A549 (cell line): ENCODE measurements at regions of chr3 and their contacts with region 1.

Region 1: GRCh38 chr3:124905849-124906248 is 18.7 kb upstream of the ITGB5 start:
- DNase-seq: no peak
- ATAC-seq: peak; percentile 39 to 41; a peak in 2 of 6 replicates
- H3K4me3 ChIP-seq: no peak overlapping the region
- H3K27ac ChIP-seq: no peak overlapping the region
- H3K4me1 ChIP-seq: peaks cover 4% of the 10 kb centered on the region; the same call in 2 of the 3 replicates
- CTCF ChIP-seq: no peak
- EP300 ChIP-seq: no peak
- POLR2A ChIP-seq: no peak
- RAD21 ChIP-seq: peak in 1 of 2 experiments; percentile 25; a peak in 1 of 5 replicates

Region 2: DNA sequence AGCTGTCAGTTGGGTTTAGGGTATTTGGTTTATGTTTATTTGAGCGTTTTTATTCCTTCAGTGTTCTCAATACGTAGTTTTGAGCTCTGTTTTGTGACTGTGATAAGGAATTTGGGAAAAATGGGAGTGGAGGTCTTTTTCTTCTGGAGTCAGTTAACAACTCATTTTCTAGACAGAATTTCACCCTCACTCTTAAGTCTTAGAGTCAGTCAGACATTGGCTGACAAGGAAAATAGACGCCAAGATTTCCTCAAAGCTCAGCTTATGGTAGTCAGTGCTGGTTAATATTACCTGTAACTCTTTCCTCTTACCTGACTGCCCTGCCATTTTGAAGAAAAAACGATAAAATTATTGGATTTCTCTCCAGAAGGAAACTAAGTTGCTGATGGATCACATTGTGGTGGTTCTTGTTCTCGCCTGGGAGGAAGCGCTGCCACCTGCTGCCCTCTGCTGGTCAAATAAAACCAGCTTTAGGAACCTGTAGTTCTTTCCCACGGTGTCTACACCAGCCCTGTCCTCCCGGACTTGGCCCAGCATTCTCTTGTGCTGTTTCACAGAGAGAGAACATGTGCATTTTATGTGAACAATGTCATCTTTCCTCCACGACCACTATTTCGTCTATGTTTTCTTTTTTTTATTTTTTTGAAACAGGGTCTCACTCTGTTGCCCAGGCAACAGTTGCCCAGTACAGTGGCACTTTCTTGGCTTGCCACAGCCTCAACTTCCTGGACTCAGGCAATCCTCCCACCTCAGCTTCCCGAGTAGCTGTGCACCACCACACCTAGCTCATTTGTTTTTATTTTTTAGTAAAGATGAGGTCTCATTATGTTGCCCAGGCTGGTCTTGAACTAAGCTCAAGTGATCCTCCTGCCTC is 217.0 kb before region 1 on chr3:
- CTCF ChIA-PET with region 1: interaction called, 13 read pairs
- POLR2A ChIA-PET with region 1: no interaction called
- DNase-seq: peak; percentile 82 to 93
- ATAC-seq: peak; percentile 98 to 99
- H3K4me3 ChIP-seq: no peak overlapping the region
- H3K27ac ChIP-seq: no peak overlapping the region
- H3K4me1 ChIP-seq: no peaks in the 10 kb centered on the region
- CTCF ChIP-seq: peak; percentile 96
- EP300 ChIP-seq: no peak
- POLR2A ChIP-seq: no peak
- RAD21 ChIP-seq: peak; percentile 94

Region 3: DNA sequence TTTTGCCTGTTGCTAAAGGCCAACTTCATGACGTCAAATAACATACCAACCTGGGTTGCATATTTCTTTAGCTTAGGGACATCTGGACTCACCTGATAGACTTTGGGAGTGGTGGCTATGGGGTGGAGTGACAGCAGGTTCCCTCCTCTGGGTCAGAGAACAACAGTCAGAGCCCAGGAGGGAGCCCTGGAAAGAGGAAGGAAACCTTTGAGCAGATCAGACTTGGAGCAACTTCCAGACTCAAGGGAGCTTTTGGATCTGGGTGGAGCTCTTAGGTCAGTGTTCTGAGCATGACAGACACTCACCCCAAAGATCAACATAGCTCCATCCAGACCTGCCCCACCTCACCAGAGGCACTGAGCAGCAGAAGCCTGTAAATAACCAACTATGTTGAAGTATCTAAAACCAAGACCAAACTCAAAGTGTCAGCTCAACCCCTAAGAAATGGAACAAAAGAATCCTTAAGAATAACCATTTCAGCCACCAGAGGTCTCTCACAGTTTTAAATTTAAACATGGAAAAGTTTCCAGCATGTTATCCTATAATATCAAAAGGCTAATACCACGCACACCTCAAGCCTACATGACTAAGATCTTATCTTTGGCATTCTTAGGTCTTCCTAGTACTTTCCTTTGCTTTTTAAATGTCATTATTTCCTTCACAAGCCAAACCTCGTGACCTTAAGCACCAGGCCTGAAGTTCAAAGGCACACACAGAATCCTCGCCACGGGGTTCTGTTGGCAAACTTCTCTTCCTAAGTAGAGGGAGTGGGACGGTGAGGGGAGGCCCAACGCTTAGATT is 119.2 kb before region 1 on chr3:
- CTCF ChIA-PET with region 1: interaction called, 205 read pairs
- POLR2A ChIA-PET with region 1: interaction called, 3 read pairs
- DNase-seq: peak in 1 of 2 experiments; percentile 66
- ATAC-seq: peak; percentile 62 to 65
- H3K4me3 ChIP-seq: no peak overlapping the region
- H3K27ac ChIP-seq: peak overlapping the region; percentile 76 to 85
- H3K4me1 ChIP-seq: peaks cover 58% of the 10 kb centered on the region
- CTCF ChIP-seq: peak; percentile 65
- EP300 ChIP-seq: no peak
- POLR2A ChIP-seq: no peak
- RAD21 ChIP-seq: peak; percentile 71 to 78

Region 4: GRCh38 chr3:124812291-124813265 is 93.3 kb before region 1 on chr3:
- CTCF ChIA-PET with region 1: interaction called, 12 read pairs
- POLR2A ChIA-PET with region 1: no interaction called
- DNase-seq: peak; percentile 91 to 94
- ATAC-seq: peak; percentile 80 to 85
- H3K4me3 ChIP-seq: peak overlapping the region; percentile 27; the same call in 2 of the 3 replicates
- H3K27ac ChIP-seq: peak overlapping the region; percentile 86 to 90
- H3K4me1 ChIP-seq: peaks cover 78% of the 10 kb centered on the region
- CTCF ChIP-seq: no peak
- EP300 ChIP-seq: peak; percentile 48 to 73; a peak in 2 of 5 replicates
- POLR2A ChIP-seq: no peak
- RAD21 ChIP-seq: peak in 1 of 2 experiments; percentile 43; a peak in 2 of 5 replicates

Region 5: DNA sequence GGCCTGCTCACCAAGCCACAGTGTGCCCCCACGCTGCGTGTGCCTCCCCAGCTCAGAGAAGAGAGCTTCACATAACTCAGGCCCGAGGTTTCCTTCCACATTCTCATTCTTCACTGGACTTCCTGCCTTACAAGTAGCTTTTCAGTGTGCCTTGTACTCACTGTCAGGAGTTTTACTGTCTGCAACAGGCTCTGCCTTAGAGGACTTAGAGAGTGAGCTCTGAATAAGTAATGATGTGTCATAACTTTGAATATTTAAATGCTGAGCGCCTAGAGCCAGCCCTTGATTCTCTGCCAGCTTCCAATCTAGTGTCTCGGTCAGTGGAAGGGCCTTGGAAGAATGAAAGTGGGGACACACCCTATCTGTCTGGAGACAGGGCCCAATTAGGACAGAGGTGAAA is 60.4 kb before region 1 on chr3:
- CTCF ChIA-PET with region 1: interaction called, 20 read pairs
- POLR2A ChIA-PET with region 1: no interaction called
- DNase-seq: peak in 1 of 2 experiments; percentile 76
- ATAC-seq: peak; percentile 74 to 83
- H3K4me3 ChIP-seq: no peak overlapping the region
- H3K27ac ChIP-seq: peak overlapping the region; percentile 71 to 86
- H3K4me1 ChIP-seq: peaks cover 75% of the 10 kb centered on the region
- CTCF ChIP-seq: no peak
- EP300 ChIP-seq: no peak
- POLR2A ChIP-seq: no peak
- RAD21 ChIP-seq: no peak

Region 6: GRCh38 chr3:124887177-124887931 is 18.5 kb before region 1 on chr3 and contains the start of gene ITGB5:
- CTCF ChIA-PET with region 1: interaction called, 72 read pairs
- POLR2A ChIA-PET with region 1: interaction called, 10 read pairs
- DNase-seq: peak; percentile 53 to 88
- ATAC-seq: peak; percentile 84 to 89
- H3K4me3 ChIP-seq: peak within 1 kb of the TSS; percentile 60
- H3K27ac ChIP-seq: peak within 1 kb of the TSS; percentile 90 to 99
- H3K4me1 ChIP-seq: peaks cover 41% of the 10 kb centered on the region
- CTCF ChIP-seq: no peak
- EP300 ChIP-seq: no peak
- POLR2A ChIP-seq: peak; percentile 68
- RAD21 ChIP-seq: no peak; a peak in 1 of 5 replicates
- polyA plus RNA-seq, gene ITGB5: 260 and 476 TPM in 2 replicates

Region 7: DNA sequence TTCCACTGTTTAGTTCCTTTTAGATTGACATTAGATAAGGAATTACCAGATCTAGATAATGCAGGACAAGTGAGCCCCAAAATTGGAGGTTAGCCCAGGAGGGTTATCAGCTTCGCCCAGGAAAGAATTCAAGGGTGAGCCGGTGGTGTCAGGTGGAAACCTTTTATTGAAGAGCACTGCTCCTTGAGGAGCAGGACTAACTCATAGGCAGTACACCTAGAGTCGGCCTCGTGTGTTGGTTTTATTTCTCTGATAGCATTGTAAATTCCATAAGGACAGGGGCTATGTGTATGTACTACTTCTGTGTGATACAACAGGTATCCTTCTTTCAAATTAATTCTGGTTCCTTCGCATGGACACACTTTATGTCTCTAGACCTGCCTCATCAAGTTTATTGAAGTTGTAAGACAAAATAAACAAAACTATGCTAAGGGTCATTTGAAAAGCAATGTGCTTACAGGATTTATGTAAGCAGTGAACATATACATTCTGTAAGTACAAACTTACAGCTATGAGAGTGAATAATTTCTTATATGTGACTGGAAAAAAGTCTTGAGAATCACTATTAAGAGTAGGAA is 557.0 kb after region 1 on chr3:
- CTCF ChIA-PET with region 1: no interaction called
- POLR2A ChIA-PET with region 1: no interaction called
- DNase-seq: no peak
- ATAC-seq: no peak
- H3K4me3 ChIP-seq: no peak overlapping the region
- H3K27ac ChIP-seq: no peak overlapping the region
- H3K4me1 ChIP-seq: no peaks in the 10 kb centered on the region
- CTCF ChIP-seq: no peak
- EP300 ChIP-seq: no peak
- POLR2A ChIP-seq: no peak
- RAD21 ChIP-seq: no peak